MCF 10A (cell line): ENCODE measurements at regions of chr4 and their contacts with region 1.

Region 1: DNA sequence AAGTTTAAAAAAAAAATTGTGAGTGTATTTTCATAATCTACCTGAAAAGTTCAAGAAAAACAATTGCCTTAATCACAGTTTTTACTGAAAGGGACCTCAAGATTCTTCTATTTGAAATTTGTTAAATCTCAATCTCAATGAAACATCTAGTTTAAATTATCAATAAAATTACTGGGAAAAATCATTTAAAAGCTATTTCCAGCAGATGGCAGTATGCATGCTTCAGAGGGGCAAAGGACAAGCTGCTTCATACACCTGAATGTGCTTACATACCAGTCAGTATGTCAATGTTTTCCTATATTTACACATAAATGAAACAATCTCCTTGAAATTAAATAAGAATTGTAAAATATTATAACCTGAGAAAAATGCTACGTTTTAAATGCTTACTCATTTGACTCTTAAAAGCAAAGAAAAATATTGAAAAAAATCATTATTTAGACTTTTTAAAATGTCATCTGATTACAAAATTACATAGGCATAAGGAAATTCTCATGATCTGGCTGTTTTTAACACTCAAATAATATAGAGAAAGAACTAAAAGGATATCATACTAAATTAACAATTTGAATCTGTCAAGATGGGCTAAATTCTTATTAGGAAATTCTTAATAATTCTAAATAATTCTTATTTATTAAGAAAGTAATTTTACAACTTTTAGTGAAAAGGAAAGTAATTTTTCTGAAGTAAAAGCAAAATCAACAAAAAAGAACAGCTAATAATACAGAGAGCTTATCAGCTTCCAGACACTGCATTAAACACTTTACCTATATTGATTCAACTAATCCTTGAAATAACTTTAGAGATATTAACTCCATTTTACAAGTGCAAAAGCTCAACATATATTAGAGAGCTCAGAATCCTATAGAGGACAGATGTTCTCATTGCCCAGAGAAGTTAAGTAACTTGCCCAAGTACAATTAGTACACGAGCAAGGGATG is 242.1 kb downstream of the ADAMTS3 start:
- DNase-seq: peak; percentile 53
- H3K4me3 Mint-ChIP-seq: no peak overlapping the region
- H3K27ac Mint-ChIP-seq: no peak overlapping the region
- H3K4me1 Mint-ChIP-seq: no peaks in the 10 kb centered on the region
- H3K27me3 Mint-ChIP-seq: no peaks in the 10 kb centered on the region
- CTCF ChIP-seq: peak; percentile 53

Region 2: DNA sequence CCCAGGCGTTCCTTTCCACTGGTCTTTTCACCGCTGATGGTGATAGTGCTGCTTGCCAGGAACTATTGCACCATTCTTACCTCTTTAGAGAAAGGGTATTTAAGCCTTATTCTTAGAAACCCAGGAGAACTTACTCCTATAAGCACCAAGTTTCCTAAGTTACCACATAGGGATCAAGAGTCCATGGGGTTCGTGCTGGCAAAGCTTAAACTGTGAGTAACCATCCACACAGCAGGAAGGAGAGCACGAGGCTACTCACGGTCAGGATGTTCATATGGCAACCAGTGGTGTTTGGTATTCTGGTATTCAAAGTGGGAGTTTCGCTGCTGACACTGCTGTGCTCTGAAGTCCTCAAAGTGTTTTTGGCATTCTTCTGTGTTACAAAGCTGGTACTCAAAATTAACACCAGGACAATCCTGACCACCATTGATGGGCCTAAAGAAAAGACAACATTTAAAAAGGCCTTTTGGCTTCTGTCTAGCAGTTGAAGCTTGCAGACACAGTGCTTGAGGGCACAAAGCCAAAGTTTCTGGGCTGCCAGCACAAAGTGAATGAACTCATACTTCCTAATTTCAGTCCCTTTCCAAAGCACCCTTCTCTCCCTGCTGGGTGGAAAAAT is 14.8 kb before region 1 on chr4:
- CTCF ChIA-PET with region 1: interaction called, 43 read pairs
- POLR2A ChIA-PET with region 1: interaction called, 6 read pairs
- intact Hi-C with region 1: no loop called
- DNase-seq: peak; percentile 98
- H3K4me3 Mint-ChIP-seq: peak overlapping the region; percentile 56
- H3K27ac Mint-ChIP-seq: peak overlapping the region; percentile 95
- H3K4me1 Mint-ChIP-seq: peaks cover 26% of the 10 kb centered on the region
- H3K27me3 Mint-ChIP-seq: no peaks in the 10 kb centered on the region
- CTCF ChIP-seq: no peak

Region 3: GRCh38 chr4:72352403-72353105 is 25.6 kb after region 1 on chr4:
- CTCF ChIA-PET with region 1: interaction called, 13 read pairs
- POLR2A ChIA-PET with region 1: interaction called, 4 read pairs
- intact Hi-C with region 1: no loop called
- DNase-seq: peak; percentile 64
- H3K4me3 Mint-ChIP-seq: no peak overlapping the region
- H3K27ac Mint-ChIP-seq: peak overlapping the region; percentile 80
- H3K4me1 Mint-ChIP-seq: peaks cover 21% of the 10 kb centered on the region
- H3K27me3 Mint-ChIP-seq: no peaks in the 10 kb centered on the region
- CTCF ChIP-seq: no peak

Region 4: GRCh38 chr4:72468904-72469502 is 142.0 kb after region 1 on chr4:
- CTCF ChIA-PET with region 1: interaction called, 164 read pairs
- POLR2A ChIA-PET with region 1: interaction called, 4 read pairs
- intact Hi-C with region 1: loop called (anchors 1 kb)
- DNase-seq: peak; percentile 54
- H3K4me3 Mint-ChIP-seq: no peak overlapping the region
- H3K27ac Mint-ChIP-seq: no peak overlapping the region
- H3K4me1 Mint-ChIP-seq: peaks cover 7% of the 10 kb centered on the region
- H3K27me3 Mint-ChIP-seq: no peaks in the 10 kb centered on the region
- CTCF ChIP-seq: peak; percentile 55

Region 5: GRCh38 chr4:73019462-73020047 is 692.6 kb after region 1 on chr4:
- CTCF ChIA-PET with region 1: interaction called, 24 read pairs
- POLR2A ChIA-PET with region 1: no interaction called
- intact Hi-C with region 1: loop called (anchors 1 kb)
- DNase-seq: peak; percentile 66
- H3K4me3 Mint-ChIP-seq: no peak overlapping the region
- H3K27ac Mint-ChIP-seq: no peak overlapping the region
- H3K4me1 Mint-ChIP-seq: no peaks in the 10 kb centered on the region
- H3K27me3 Mint-ChIP-seq: peaks cover 9% of the 10 kb centered on the region
- CTCF ChIP-seq: peak; percentile 62